ENCODE measurements at regions of chr7 and their contacts with region 1.

Region 1: DNA sequence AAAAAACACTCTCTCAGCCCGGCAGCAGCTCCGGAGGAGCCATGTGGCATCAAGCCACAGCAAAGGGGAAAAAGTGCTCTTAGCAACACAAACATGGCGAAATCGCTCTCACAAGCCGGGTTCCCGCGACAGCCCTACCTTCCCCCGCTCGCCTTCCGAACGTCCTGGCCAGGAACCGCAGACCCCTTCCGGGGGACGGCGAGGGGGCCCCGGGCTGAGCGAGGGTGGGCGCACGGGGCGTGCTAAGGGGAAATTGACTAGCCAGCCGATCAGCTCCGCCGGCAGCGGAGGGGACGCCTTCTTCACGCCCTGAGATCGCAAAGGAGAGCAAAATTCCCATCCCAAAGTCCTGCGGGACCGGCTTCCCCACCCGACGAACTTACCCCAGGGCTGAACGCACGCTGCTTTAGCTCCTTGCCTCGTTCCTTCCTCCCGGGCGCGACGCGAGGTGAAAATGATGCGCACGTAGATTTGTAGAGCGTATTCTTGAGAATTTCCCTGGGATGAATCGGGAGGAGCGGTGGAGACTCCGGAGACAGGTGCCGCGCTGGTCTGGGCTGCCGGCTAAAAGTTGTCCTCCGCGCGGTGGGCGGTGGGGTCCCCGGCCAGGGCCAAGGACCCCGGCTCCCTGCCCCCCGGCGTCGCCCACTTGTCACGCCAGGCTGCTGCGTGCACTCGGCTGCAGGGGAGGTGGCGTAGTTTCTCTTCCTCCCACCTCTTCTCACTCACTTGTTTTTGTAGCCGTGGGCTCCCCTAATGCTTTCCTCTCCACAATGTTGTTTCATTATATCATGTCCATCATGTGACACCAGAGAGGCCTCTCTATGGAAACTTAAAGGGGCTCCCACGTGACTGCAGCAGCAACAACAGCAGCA is 220.1 kb upstream of the MKLN1 start:
- DNase-seq: peak; percentile 68 to 91
- ATAC-seq: peak; percentile 10 to 51 (median 35)
- H3K4me3 ChIP-seq: peak overlapping the region; percentile 95
- H3K4me3 Mint-ChIP-seq: peak overlapping the region; percentile 85
- H3K27ac ChIP-seq: peak overlapping the region; percentile 93
- H3K27ac Mint-ChIP-seq: peak overlapping the region; percentile 98 to 99
- H3K4me1 ChIP-seq: peaks cover 35% of the 10 kb centered on the region
- H3K4me1 Mint-ChIP-seq: peaks cover 69 to 75% of the 10 kb centered on the region in 2 donors
- H3K27me3 ChIP-seq: no peaks in the 10 kb centered on the region
- H3K27me3 Mint-ChIP-seq: no peaks in the 10 kb centered on the region
- CTCF ChIP-seq: no peak

Region 2: DNA sequence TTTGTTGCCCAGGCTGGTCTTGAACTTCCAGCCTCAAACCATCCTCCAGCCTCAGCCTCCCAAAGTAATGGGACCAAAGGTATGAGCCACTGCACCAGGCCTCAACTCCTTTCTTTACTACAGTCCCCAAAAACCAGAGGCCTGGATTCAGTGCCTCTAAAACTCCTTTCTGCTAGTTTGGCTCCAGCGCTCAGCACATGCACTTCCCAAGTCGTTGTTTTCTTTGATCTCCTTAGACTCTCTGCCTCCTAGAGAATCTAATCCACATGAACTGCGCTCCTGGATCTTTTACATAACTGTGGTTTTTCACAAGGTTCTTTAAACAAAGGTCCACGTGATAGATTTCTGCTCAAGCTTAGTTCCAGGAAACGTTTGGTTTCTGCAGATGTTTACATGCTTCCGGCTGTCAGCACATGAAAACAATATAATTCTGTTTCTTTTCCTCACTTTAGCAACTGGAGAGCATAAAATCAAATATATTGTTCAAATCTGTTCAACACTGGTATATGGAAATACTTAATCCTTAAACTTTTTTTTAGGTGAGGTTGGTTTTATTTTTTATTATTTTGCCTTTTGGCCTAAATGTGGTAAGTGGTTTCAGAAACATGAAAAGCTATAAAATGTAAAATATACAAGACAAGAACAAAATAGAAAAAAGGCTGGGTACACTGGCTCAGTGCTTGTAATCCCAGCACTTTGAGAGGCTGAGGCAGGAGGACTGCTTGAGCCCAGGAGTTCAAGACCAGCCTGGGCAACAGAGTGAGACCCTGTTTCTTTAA is 50.4 kb before region 1 on chr7:
- intact Hi-C with region 1: loop called (anchors 5 kb)
- DNase-seq: peak in 1 of 2 donors; percentile 78
- ATAC-seq: peak; percentile 32 to 76 (median 56)
- H3K4me3 ChIP-seq: peak overlapping the region; percentile 1
- H3K4me3 Mint-ChIP-seq: peak overlapping the region; percentile 93
- H3K27ac ChIP-seq: peak overlapping the region; percentile 92
- H3K27ac Mint-ChIP-seq: peak overlapping the region; percentile 96 to 97
- H3K4me1 ChIP-seq: peaks cover 52% of the 10 kb centered on the region
- H3K4me1 Mint-ChIP-seq: peaks cover 66 to 78% of the 10 kb centered on the region in 2 donors
- H3K27me3 ChIP-seq: no peaks in the 10 kb centered on the region
- H3K27me3 Mint-ChIP-seq: no peaks in the 10 kb centered on the region
- CTCF ChIP-seq: no peak

Region 3: GRCh38 chr7:131188367-131189339 is 81.1 kb after region 1 on chr7:
- intact Hi-C with region 1: loop called (anchors 1 kb)
- DNase-seq: peak; percentile 37 to 88
- ATAC-seq: peak; percentile 88 to 97 (median 96)
- H3K4me3 ChIP-seq: no peak overlapping the region
- H3K4me3 Mint-ChIP-seq: peak overlapping the region; percentile 57
- H3K27ac ChIP-seq: peak overlapping the region; percentile 67
- H3K27ac Mint-ChIP-seq: peak overlapping the region; percentile 87 to 96
- H3K4me1 ChIP-seq: peaks cover 12% of the 10 kb centered on the region
- H3K4me1 Mint-ChIP-seq: peaks cover 27 to 28% of the 10 kb centered on the region in 2 donors
- H3K27me3 ChIP-seq: no peaks in the 10 kb centered on the region
- H3K27me3 Mint-ChIP-seq: no peaks in the 10 kb centered on the region
- CTCF ChIP-seq: no peak

Region 4: GRCh38 chr7:131327626-131328376 is 220.2 kb after region 1 on chr7 and contains the start of gene MKLN1:
- intact Hi-C with region 1: loop called (anchors 2 kb)
- DNase-seq: peak; percentile 86 to 95
- ATAC-seq: peak; percentile 97 to 99 (median 98)
- H3K4me3 ChIP-seq: peak within 1 kb of the TSS; percentile 94
- H3K4me3 Mint-ChIP-seq: peak within 1 kb of the TSS; percentile 99
- H3K27ac ChIP-seq: peak within 1 kb of the TSS; percentile 91
- H3K27ac Mint-ChIP-seq: peak within 1 kb of the TSS; percentile 95 to 100
- H3K4me1 ChIP-seq: peaks cover 8% of the 10 kb centered on the region
- H3K4me1 Mint-ChIP-seq: peaks cover 42 to 50% of the 10 kb centered on the region in 2 donors
- H3K27me3 ChIP-seq: no peaks in the 10 kb centered on the region
- H3K27me3 Mint-ChIP-seq: peaks cover 0 to 3% of the 10 kb centered on the region in 2 donors
- CTCF ChIP-seq: no peak
- total RNA-seq, gene MKLN1: 59.1 to 79.6 (median 65.0) TPM